GM12878 (cell line): ENCODE measurements at regions of chr3 and their contacts with region 1.

Region 1: GRCh38 chr3:58217209-58217811 is 6.5 kb upstream of the DNASE1L3 start:
- DNase-seq: no peak
- ATAC-seq: peak; percentile 59
- H3K4me3 ChIP-seq: no peak overlapping the region
- H3K27ac ChIP-seq: no peak overlapping the region
- H3K4me1 ChIP-seq: peaks cover 56% of the 10 kb centered on the region
- H3K27me3 ChIP-seq: no peaks in the 10 kb centered on the region
- CTCF ChIP-seq: peak; percentile 84 to 94 (median 89)
- EP300 ChIP-seq: 0 out of 4 replicates have a peak, but pooled peaks of 1 of the 2 experiments have one; percentile 19
- POLR2A ChIP-seq: no peak
- RAD21 ChIP-seq: peak; percentile 74

Region 2: DNA sequence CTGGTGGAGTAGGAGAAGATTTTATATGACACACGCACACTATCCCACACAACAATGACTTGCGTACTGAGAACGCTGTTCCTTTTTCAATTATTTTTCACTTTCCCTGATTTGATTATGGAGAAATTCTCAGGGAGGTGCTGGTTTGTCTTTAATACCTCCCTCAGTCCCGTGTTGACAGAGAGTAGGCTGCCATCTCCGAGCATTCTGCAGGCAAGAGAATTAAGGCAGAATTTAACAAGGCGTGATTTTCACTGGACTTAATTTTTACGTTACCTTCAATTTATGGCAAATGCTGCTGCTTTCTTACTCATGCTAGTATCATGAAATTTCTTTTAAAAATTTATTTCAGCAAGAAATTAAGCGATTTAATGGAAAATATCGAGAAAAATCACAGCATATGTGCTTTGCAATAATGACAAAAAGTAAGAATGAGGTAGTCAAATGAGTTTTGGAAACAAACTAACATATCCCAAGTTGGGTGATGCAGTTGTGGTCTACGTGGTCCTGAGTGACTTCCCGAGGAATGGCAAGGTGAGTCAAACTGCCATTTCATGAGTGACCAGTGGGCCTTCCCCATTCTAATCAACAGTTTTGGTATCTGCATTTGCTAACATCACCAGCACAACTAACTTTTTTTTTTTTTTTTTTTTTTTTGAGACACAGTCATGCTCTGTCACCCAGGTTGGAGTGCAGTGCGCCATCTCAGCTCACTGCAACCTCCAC is 23.5 kb before region 1 on chr3:
- CTCF ChIA-PET with region 1: interaction called, 655 read pairs
- POLR2A ChIA-PET with region 1: interaction called, 491 read pairs
- RAD21 ChIA-PET with region 1: interaction called, 285 read pairs
- SMC1A ChIA-PET with region 1: interaction called, 510 read pairs
- in situ Hi-C with region 1: loop called (anchors 5 kb)
- intact Hi-C with region 1: loop called (anchors 1 kb)
- DNase-seq: no peak
- ATAC-seq: no peak
- H3K4me3 ChIP-seq: no peak overlapping the region
- H3K27ac ChIP-seq: no peak overlapping the region
- H3K4me1 ChIP-seq: peaks cover 20% of the 10 kb centered on the region
- H3K27me3 ChIP-seq: no peaks in the 10 kb centered on the region
- CTCF ChIP-seq: no peak
- EP300 ChIP-seq: no peak
- POLR2A ChIP-seq: no peak
- RAD21 ChIP-seq: no peak

Region 3: GRCh38 chr3:58206406-58207011 is 10.8 kb before region 1 on chr3:
- CTCF ChIA-PET with region 1: interaction called, 655 read pairs
- POLR2A ChIA-PET with region 1: interaction called, 491 read pairs
- RAD21 ChIA-PET with region 1: interaction called, 285 read pairs
- SMC1A ChIA-PET with region 1: interaction called, 510 read pairs
- in situ Hi-C with region 1: no loop called
- intact Hi-C with region 1: loop called (anchors 2 kb)
- DNase-seq: no peak
- ATAC-seq: peak; percentile 58
- H3K4me3 ChIP-seq: no peak overlapping the region
- H3K27ac ChIP-seq: peak overlapping the region; percentile 6; the same call in 1 of the 2 replicates
- H3K4me1 ChIP-seq: peaks cover 23% of the 10 kb centered on the region
- H3K27me3 ChIP-seq: no peaks in the 10 kb centered on the region
- CTCF ChIP-seq: no peak
- EP300 ChIP-seq: no peak
- POLR2A ChIP-seq: no peak
- RAD21 ChIP-seq: no peak

Region 4: GRCh38 chr3:58249358-58250092 is 32.2 kb after region 1 on chr3:
- CTCF ChIA-PET with region 1: interaction called, 5 read pairs
- POLR2A ChIA-PET with region 1: interaction called, 3 read pairs
- RAD21 ChIA-PET with region 1: interaction called, 6 read pairs
- SMC1A ChIA-PET with region 1: interaction called, 11 read pairs
- in situ Hi-C with region 1: no loop called
- intact Hi-C with region 1: no loop called
- DNase-seq: no peak
- ATAC-seq: peak; percentile 89
- H3K4me3 ChIP-seq: no peak overlapping the region
- H3K27ac ChIP-seq: no peak overlapping the region
- H3K4me1 ChIP-seq: peaks cover 9% of the 10 kb centered on the region
- H3K27me3 ChIP-seq: no peaks in the 10 kb centered on the region
- CTCF ChIP-seq: no peak; a peak in 1 of 6 replicates
- EP300 ChIP-seq: no peak
- POLR2A ChIP-seq: no peak
- RAD21 ChIP-seq: 0 out of 2 replicates have a peak, but pooled peaks have one; percentile 8

Region 5: DNA sequence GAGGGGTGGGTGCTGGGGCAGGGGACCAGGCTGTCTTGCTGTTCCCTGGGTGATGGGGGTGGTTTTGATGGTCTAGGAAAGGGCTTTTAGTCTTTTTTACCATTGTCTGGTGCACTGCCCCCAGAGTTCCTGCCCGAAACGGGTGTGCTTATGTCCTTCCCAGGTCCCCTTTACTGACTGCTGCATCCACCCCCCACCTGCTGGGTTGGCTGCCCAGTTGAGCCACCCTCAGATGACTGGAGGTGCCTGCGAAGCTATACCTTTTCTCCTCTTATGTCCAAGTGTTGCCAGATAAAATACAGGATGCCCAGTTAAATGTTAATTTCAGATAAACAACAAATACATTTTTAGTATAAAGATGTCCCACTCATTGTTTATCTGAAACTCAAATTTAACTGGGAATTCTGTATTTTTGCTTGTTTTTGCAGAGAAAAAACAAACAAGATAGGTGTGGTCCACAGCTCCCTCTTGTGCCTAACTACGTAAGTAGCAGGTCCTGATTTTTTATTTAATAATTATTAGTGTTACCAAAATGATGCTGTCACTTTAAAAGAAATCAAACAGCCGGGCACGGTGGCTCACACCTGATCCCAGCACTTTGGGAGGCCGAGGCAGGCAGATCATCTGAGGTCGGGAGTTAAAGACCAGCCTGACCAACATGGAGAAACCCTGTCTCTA is 82.7 kb after region 1 on chr3:
- CTCF ChIA-PET with region 1: interaction called, 54 read pairs
- POLR2A ChIA-PET with region 1: no interaction called
- RAD21 ChIA-PET with region 1: interaction called, 25 read pairs
- SMC1A ChIA-PET with region 1: interaction called, 35 read pairs
- in situ Hi-C with region 1: no loop called
- intact Hi-C with region 1: no loop called
- DNase-seq: no peak
- ATAC-seq: peak; percentile 59
- H3K4me3 ChIP-seq: no peak overlapping the region
- H3K27ac ChIP-seq: no peak overlapping the region
- H3K4me1 ChIP-seq: no peaks in the 10 kb centered on the region
- H3K27me3 ChIP-seq: no peaks in the 10 kb centered on the region; a peak in 1 of 4 replicates
- CTCF ChIP-seq: peak; percentile 48 to 59 (median 51); a peak in 5 of 6 replicates
- EP300 ChIP-seq: no peak
- POLR2A ChIP-seq: no peak
- RAD21 ChIP-seq: peak; percentile 74